Mammary epithelial cell (primary cell): ENCODE measurements at regions of chr10 and their contacts with region 1.

Region 1: DNA sequence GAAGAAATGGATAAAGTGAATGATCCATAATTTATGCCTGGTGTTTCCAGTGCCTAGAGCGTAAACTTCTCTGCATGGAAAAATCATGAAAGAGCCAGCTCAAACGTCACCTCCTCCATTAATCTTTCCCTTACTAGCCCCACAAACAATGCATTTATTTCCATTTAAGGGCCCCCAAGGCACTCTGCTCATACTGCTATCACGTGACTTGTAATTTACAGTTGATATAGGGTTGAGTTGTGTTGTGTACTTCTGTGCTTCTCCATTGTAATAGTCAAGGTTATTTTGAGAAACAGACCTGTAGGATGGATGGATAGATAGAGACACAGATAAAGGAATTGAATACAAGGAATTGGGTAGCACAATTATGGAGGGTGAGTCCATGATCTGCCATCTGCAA is 1034.7 kb upstream of the GHITM start:
- DNase-seq: no peak
- H3K4me3 ChIP-seq: no peak overlapping the region
- H3K27ac ChIP-seq: no peak overlapping the region
- H3K4me1 ChIP-seq: no peaks in the 10 kb centered on the region
- H3K27me3 ChIP-seq: no peaks in the 10 kb centered on the region
- CTCF ChIP-seq: no peak

Region 2: DNA sequence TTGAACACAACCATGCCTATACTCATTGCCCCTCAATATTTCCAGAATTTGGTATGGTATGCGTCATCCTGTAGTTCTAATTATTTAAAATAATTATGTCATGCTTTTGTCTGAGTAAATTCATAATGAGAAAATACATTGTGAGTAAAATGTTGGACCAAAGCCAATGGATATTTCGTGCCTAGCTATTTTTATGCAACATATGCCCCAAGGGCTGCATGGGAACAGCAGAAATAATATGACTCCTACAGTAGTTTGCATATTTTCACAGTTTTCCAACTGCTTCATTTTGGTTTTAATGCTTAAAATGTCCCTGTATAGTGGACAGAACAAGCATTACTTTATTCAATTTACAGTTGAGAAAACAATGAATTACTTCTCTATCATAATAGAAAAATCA is 81.0 kb before region 1 on chr10:
- CTCF ChIA-PET with region 1: no interaction called
- dilution Hi-C with region 1: no loop called
- in situ Hi-C with region 1: no loop called
- intact Hi-C with region 1: no loop called
- DNase-seq: peak; percentile 52
- H3K4me3 ChIP-seq: no peak overlapping the region
- H3K27ac ChIP-seq: no peak overlapping the region
- H3K4me1 ChIP-seq: peaks cover 10% of the 10 kb centered on the region
- H3K27me3 ChIP-seq: no peaks in the 10 kb centered on the region
- CTCF ChIP-seq: no peak

Region 3: GRCh38 chr10:83199374-83199773 is 94.8 kb after region 1 on chr10:
- CTCF ChIA-PET with region 1: no interaction called
- dilution Hi-C with region 1: loop called (anchors 5 kb)
- in situ Hi-C with region 1: no loop called
- intact Hi-C with region 1: no loop called
- DNase-seq: no peak
- H3K4me3 ChIP-seq: no peak overlapping the region
- H3K27ac ChIP-seq: no peak overlapping the region
- H3K4me1 ChIP-seq: no peaks in the 10 kb centered on the region
- H3K27me3 ChIP-seq: no peaks in the 10 kb centered on the region
- CTCF ChIP-seq: no peak